Body of pancreas (tissue), 4 donors: ENCODE measurements at regions of chr16 and their contacts with region 1.

Region 1: DNA sequence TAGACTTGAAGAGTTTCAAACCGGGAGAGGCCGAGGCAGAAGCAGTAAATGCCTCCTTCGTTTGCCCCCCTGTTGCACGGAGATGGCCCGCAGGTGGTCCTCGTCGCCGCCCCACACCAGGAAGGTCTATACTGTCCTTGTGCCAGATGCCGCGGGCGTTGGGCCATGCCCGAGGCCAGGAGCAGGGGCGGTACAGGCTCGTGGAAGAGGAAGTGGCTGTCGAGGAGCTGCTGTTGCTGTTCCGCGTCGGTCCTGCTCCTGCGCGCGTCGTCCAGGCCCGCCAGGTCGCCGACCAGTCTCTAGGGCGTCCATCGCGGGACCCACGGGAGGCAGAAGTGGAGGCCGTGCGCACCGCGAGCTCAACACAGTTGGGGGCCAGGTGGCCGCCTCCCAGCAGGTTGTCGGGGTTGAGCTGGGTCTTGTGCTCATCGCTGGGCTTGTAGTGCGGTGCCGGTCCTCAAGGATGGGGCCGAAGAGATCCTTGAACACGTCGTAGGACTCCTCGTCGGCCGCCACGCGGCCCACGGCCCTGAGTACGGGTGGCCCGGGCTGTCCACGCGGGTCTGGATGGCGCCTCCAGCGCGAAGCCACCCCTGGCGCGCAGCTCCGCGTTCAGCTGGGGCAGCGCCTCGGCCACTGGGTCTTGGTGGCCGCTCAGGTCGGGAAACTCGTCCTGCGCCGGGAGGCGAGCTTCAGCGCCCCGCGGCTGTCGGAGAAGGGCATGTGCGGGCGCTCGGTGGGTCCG is 13.1 kb upstream of the C16orf87 start:
- DNase-seq: no peak
- ATAC-seq: no peak
- H3K4me3 ChIP-seq: no peak overlapping the region
- H3K27ac ChIP-seq: no peak overlapping the region
- H3K4me1 ChIP-seq: no peaks in the 10 kb centered on the region
- H3K27me3 ChIP-seq: no peaks in the 10 kb centered on the region
- CTCF ChIP-seq: no peak
- POLR2A ChIP-seq: no peak

Region 2: DNA sequence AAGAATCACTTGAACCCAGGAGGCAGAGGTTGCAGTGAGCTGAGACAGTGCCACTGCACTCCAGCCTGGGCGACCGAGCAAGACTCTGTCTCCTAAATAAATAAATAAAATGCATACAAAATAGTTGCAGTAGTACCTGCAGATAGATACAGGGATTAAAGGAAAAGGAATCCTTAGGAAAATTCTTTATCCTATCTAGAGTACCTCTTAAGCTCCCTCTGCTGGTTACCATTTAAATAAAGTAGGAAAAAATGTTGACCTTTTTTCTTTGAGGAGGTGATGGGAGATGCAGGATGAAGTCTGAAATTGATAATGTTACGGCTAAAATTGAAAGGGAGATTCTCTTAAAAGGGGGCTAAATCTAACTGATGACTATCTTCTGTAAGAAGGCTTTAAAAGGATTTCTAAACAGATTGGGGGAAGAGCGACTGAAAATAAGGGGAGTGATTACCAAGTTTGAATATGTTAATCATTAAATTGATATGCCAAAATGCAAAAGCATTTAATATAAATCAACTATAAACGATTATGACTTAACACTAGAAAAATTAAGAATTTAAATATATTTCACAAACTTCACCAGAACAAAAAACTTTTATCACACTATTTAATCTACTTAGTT is 42.5 kb before region 1 on chr16:
- intact Hi-C with region 1: no loop called
- DNase-seq: no peak
- ATAC-seq: no peak
- H3K4me3 ChIP-seq: no peak overlapping the region
- H3K27ac ChIP-seq: no peak overlapping the region
- H3K4me1 ChIP-seq: no peaks in the 10 kb centered on the region
- H3K27me3 ChIP-seq: no peaks in the 10 kb centered on the region
- CTCF ChIP-seq: peak in 5 of 7 experiments; percentile 28 to 48 (median 44)
- POLR2A ChIP-seq: no peak

Region 3: GRCh38 chr16:46883690-46884512 is 39.8 kb after region 1 on chr16 and contains the start of gene GPT2:
- intact Hi-C with region 1: no loop called
- DNase-seq: peak; percentile 99
- ATAC-seq: peak; percentile 81
- H3K4me3 ChIP-seq: peak within 1 kb of the TSS; percentile 60 to 69
- H3K27ac ChIP-seq: peak within 1 kb of the TSS; percentile 89 to 95 (median 92)
- H3K4me1 ChIP-seq: peaks cover 66% of the 10 kb centered on the region
- H3K27me3 ChIP-seq: no peaks in the 10 kb centered on the region
- CTCF ChIP-seq: peak in 2 of 7 experiments; percentile 30 to 41
- POLR2A ChIP-seq: peak; percentile 91 to 97 (median 96)
- total RNA-seq, gene GPT2: 52.1 to 83.1 TPM

Region 4: DNA sequence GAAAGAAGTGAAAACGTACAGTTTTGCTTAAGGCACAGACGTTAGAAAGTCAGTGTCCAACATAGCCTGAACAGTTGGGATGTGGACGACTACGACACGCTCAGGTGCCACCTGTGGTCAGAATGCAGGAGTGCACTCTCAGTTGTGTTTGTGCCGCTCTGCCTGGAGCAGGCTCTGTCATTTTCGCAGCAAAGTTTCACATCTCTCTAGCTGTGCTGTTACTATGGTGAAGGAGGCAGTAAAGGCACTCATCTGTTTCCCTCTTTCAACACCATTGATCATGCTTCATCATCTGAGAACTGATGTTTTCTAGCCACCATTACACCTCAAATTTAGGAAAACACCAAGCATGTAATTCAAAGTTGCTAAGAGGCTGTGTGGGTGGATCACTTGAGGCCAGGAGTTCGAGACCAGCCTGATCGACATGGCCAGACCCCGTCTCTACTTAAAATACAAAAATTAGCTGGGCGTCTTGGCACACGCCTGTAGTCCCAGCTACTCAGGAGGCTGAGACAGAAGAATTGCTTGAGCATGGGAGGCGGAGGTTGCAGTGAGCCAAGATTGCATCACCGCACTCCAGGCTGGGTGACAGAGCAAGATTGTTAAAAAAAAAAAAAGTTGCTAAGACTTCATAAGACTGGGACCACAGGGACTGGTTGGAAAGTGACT is 174.3 kb after region 1 on chr16:
- intact Hi-C with region 1: loop called (anchors 10 kb)
- DNase-seq: peak; percentile 63 to 74 (median 69)
- ATAC-seq: peak; percentile 93
- H3K4me3 ChIP-seq: no peak overlapping the region
- H3K27ac ChIP-seq: no peak overlapping the region
- H3K4me1 ChIP-seq: no peaks in the 10 kb centered on the region
- H3K27me3 ChIP-seq: no peaks in the 10 kb centered on the region
- CTCF ChIP-seq: peak; percentile 9 to 74 (median 58)
- POLR2A ChIP-seq: no peak

Region 5: GRCh38 chr16:47949714-47950113 is 1105.6 kb after region 1 on chr16:
- intact Hi-C with region 1: no loop called
- DNase-seq: no peak
- ATAC-seq: no peak
- H3K4me3 ChIP-seq: no peak overlapping the region
- H3K27ac ChIP-seq: no peak overlapping the region
- H3K4me1 ChIP-seq: no peaks in the 10 kb centered on the region
- H3K27me3 ChIP-seq: no peaks in the 10 kb centered on the region
- CTCF ChIP-seq: no peak
- POLR2A ChIP-seq: no peak